Activated CD4-positive, alpha-beta memory T cell treated with anti-CD3 and anti-CD28 coated beads for 36 hours (primary cell): ENCODE measurements at regions of chr1 and their contacts with region 1.

Region 1: GRCh38 chr1:160629286-160630210 is 17.3 kb downstream of the SLAMF1 start:
- DNase-seq: peak; percentile 85
- H3K4me3 Mint-ChIP-seq: peak overlapping the region; percentile 69
- H3K27ac Mint-ChIP-seq: peak overlapping the region; percentile 98
- H3K4me1 Mint-ChIP-seq: peaks cover 93% of the 10 kb centered on the region
- H3K27me3 Mint-ChIP-seq: no peaks in the 10 kb centered on the region

Region 2: DNA sequence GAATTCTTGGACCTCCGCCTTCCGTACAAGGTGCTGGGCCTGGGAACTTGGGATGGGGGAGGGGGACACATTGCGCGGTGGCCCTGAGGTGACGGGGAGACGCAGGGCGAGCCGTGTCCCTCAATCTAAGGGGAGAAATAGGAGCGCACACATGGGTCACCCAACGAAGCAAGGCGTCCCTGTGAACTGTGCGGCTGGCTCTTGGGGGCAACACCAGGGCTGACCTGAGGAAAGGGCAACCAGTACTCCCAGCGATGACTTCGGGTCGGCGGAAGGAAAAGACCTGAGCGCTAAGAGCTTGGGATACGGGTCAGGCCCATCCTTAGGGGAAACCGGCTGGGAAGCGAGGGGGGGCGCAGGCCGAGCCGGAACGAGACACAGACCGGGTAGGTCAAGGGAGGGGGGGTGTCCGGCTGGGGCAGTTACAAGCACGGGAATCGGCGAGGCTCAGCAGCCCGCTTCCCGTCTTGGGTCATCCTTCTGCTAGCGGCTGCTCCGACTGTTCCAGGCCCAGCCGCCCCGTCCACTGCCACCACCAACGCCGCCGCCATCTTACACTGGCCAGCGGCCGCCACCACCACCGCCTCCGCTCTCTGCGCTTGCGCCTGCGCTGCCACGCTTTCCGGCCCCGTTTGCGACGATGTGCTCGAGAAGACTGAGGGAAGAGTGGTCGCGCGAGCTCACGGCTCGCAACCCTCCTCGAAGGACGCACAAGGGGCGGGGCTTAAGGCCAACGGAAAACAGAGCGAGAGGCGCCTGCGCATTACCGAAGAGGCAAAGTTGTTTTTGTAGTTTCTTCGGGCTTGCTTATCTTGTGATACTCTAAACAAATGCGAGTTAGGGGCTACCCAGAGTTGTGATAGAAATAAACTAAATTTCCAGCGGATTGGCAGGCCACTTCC is 367.4 kb before region 1 on chr1 and contains the start of gene DCAF8:
- CTCF ChIA-PET with region 1: no interaction called
- POLR2A ChIA-PET with region 1: no interaction called
- intact Hi-C with region 1: loop called (anchors 10 kb)
- DNase-seq: peak; percentile 99
- H3K4me3 Mint-ChIP-seq: peak within 1 kb of the TSS; percentile 96
- H3K27ac Mint-ChIP-seq: peak within 1 kb of the TSS; percentile 99
- H3K4me1 Mint-ChIP-seq: peaks cover 45% of the 10 kb centered on the region
- H3K27me3 Mint-ChIP-seq: no peaks in the 10 kb centered on the region
- total RNA-seq, gene DCAF8: 142 to 150 TPM

Region 3: DNA sequence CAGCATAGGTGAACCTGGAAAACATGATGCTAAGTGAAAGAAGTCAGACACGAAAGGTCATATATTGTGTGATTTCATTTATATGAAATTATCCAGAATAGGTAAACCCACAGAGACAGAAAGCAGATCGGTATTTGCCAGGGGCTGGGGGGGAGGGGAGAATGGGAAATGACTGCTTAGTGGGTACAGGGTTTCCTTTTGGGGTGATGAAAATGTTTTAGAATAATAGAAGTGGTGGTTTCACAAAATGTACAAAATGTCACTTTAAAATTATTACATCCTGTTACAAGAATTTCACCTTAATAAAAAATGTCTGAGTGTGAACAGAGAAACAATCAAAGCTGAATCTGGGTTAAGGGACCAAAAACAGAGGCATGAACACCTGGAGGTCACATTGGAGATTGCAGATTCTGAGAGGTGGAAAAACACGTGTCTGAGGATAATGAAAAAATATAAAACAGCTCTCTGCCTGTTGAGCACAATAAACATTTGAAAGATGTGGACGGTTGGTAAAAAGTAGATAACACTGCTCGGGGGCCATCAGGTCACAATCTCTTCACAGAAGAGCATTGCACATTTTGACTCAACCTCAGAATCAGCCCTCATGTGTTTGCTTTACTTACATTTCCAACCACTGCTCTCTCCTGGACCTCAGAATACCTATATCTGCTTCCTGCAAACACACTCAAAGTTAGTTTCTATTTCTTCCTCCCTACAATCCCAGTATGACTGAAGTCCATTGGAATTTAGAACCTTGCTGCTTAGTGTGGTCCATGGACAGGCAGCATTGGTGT is 109.7 kb before region 1 on chr1:
- CTCF ChIA-PET with region 1: no interaction called
- POLR2A ChIA-PET with region 1: interaction called, 3 read pairs
- intact Hi-C with region 1: loop called (anchors 1 kb)
- DNase-seq: peak; percentile 66
- H3K4me3 Mint-ChIP-seq: peak overlapping the region; percentile 92
- H3K27ac Mint-ChIP-seq: peak overlapping the region; percentile 92
- H3K4me1 Mint-ChIP-seq: peaks cover 83% of the 10 kb centered on the region
- H3K27me3 Mint-ChIP-seq: no peaks in the 10 kb centered on the region

Region 4: GRCh38 chr1:160646711-160647328 is 17.3 kb after region 1 on chr1 and contains the start of gene SLAMF1:
- CTCF ChIA-PET with region 1: interaction called, 14 read pairs
- POLR2A ChIA-PET with region 1: interaction called, 288 read pairs
- intact Hi-C with region 1: no loop called
- DNase-seq: peak; percentile 85
- H3K4me3 Mint-ChIP-seq: peak within 1 kb of the TSS; percentile 96
- H3K27ac Mint-ChIP-seq: peak within 1 kb of the TSS; percentile 98
- H3K4me1 Mint-ChIP-seq: peaks cover 47% of the 10 kb centered on the region
- H3K27me3 Mint-ChIP-seq: no peaks in the 10 kb centered on the region
- total RNA-seq, gene SLAMF1: 166 TPM

Region 5: GRCh38 chr1:160711602-160712311 is 82.2 kb after region 1 on chr1 and contains the start of gene CD48:
- CTCF ChIA-PET with region 1: interaction called, 3 read pairs
- POLR2A ChIA-PET with region 1: interaction called, 6 read pairs
- intact Hi-C with region 1: loop called (anchors 1 kb)
- DNase-seq: peak; percentile 65
- H3K4me3 Mint-ChIP-seq: no peak within 1 kb of the TSS
- H3K27ac Mint-ChIP-seq: no peak within 1 kb of the TSS
- H3K4me1 Mint-ChIP-seq: peaks cover 17% of the 10 kb centered on the region
- H3K27me3 Mint-ChIP-seq: no peaks in the 10 kb centered on the region
- total RNA-seq, gene CD48: 190 to 194 TPM

Region 6: GRCh38 chr1:161117759-161118581 is 488.4 kb after region 1 on chr1 and contains the starts of genes NIT1 and PFDN2:
- CTCF ChIA-PET with region 1: no interaction called
- POLR2A ChIA-PET with region 1: interaction called, 3 read pairs
- intact Hi-C with region 1: loop called (anchors 5 kb)
- DNase-seq: peak; percentile 92
- H3K4me3 Mint-ChIP-seq: peak within 1 kb of the TSS; percentile 93
- H3K27ac Mint-ChIP-seq: peak within 1 kb of the TSS; percentile 84
- H3K4me1 Mint-ChIP-seq: peaks cover 66% of the 10 kb centered on the region
- H3K27me3 Mint-ChIP-seq: no peaks in the 10 kb centered on the region
- total RNA-seq, gene NIT1: 65.2 to 66.5 TPM
- total RNA-seq, gene PFDN2: 152 to 155 TPM